Psoas muscle (tissue), 8 donors: ENCODE measurements at regions of chr2 and their contacts with region 1.

Region 1: DNA sequence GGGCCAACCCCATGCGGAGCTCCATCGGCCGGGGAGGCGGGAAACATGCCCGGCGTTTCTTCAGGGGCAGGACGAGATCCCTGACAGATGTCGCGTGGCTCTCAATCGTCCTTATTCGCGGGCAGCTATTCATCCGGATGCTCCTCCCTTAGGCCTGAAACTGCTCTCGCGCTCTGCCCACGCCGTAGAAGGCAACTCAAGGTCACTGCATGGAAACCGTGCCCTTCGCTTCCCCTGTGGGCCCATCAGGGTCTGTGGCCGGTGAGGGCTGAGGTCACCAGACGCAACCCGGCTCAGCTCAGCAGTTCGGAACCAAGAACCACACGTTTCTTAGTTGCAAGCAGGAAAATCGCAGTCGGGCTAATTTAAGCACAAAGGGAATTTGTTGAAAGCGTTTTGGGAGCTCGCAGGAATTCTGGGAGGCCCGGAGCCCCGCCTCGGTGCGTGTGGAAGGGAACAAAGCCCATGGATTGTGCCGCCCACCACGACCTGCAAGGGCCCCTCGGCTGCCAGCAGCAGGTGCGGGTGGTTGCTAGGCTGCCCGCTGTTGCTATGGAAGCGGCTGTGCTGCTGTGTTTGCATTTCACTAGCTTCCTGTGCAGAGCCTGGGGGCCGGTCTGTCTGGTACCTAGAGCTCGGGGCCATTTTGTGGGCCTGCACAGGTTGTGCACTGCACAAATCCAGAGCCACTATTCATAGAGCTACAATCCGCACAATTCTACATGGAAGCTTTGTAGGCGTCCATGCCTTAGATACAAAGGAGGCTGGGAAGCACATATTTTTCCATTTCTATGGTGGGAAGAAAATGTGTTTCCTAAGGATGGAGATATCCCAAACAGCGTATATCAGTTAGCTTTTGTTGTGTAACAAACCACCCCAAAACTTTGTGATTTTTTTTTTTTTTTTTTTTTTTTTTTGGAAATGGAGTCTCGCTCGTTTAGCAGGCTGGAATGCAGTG is 6.0 kb upstream of the ALLC start:
- DNase-seq: peak in 1 of 2 donors; percentile 39
- ATAC-seq: peak in 3 of 4 donors; percentile 38 to 47 (median 44)
- H3K4me3 ChIP-seq: peak overlapping the region; percentile 55
- H3K27ac ChIP-seq: peak overlapping the region; percentile 23
- H3K4me1 ChIP-seq: no peaks in the 10 kb centered on the region
- H3K27me3 ChIP-seq: peaks cover 0 to 20% (median 0%) of the 10 kb centered on the region in 3 donors
- CTCF ChIP-seq: no peak

Region 2: DNA sequence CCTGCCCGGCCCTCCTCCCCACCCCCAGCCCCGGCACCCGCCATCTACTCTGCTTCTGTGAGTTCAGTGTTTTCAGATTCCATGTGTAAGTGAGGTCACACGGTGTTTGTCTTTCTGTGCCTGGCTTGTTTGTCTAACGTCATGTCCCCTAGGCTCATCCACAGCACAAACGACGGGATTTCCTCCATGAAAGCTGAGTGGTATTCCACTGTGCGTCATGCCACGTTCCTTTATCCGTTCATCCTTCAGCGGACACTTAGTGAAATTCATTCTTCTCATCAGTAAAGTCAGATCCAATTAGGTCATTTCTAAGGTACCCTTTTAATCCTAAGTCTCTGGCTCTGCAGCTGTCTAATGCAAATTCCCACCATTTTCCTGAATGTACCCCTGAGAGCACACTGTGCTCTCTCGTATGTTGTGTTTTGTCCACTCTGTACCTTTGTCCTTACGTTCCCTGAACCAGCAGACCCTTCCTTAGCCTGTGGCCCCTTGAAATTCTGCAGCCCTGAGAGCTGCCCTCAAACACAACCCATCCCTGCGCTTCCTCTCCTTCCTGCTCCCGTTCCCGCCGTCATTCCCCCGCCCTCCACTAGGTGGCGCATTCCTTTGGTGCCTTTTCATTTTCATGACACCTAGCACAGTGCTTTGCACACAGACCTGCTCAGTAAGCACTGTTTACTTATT is 228.3 kb before region 1 on chr2:
- intact Hi-C with region 1: loop called (anchors 2 to 5 kb)
- DNase-seq: peak; percentile 72 to 81
- ATAC-seq: peak; percentile 62 to 84 (median 76)
- H3K4me3 ChIP-seq: no peak overlapping the region
- H3K27ac ChIP-seq: no peak overlapping the region
- H3K4me1 ChIP-seq: no peaks in the 10 kb centered on the region
- H3K27me3 ChIP-seq: no peaks in the 10 kb centered on the region
- CTCF ChIP-seq: peak; percentile 99

Region 3: GRCh38 chr2:3575534-3576262 is 76.3 kb before region 1 on chr2:
- intact Hi-C with region 1: loop called in 1 of 2 experiments (anchors 5 kb)
- DNase-seq: peak in 1 of 2 donors; percentile 23
- ATAC-seq: peak; percentile 25 to 54 (median 42)
- H3K4me3 ChIP-seq: peak overlapping the region; percentile 92
- H3K27ac ChIP-seq: peak overlapping the region; percentile 84
- H3K4me1 ChIP-seq: peaks cover 27% of the 10 kb centered on the region
- H3K27me3 ChIP-seq: no peaks in the 10 kb centered on the region
- CTCF ChIP-seq: no peak